ENCODE measurements at regions of chr5 and their contacts with region 1.

Region 1: GRCh38 chr5:132662925-132663770 is 5.2 kb downstream of the IL13 start:
- DNase-seq: peak; percentile 87
- CTCF ChIP-seq: no peak

Region 2: DNA sequence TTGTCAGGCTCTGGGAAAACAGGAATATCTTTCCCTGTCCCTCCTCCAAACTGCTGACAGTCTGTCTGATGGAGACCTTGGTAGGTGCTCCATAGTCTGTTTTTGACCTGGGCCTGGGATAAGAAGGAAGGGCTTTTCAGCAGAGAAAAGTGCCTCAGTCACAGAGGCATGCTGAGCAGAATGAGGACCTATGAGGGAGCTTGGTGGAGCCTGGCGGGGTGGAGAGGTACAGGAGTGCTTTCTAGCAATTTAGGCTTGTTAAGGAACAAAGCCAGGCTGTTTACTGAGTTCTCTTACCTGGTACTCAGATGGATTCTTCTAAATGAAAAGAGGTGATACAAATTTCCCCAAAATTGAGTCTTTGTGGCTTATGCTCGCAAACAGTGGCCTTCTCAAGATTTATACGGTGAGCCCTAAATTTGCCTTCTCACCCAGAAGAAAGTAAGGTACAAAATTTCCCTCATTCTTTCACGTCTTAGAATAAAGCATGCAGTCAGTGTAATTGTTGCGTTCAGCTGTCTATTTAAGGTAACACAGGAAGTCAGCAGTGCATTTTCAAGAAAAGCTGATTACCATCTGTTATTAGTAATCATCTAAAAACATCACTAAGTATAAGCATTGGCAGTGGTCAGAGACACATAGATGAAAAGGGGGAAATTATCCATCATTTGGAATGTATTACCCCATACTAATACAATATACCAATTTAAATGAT is 33.8 kb before region 1 on chr5:
- CTCF ChIA-PET with region 1: interaction called, 15 read pairs
- POLR2A ChIA-PET with region 1: no interaction called
- DNase-seq: peak; percentile 51
- CTCF ChIP-seq: no peak

Region 3: GRCh38 chr5:132639706-132640130 is 23.4 kb before region 1 on chr5:
- CTCF ChIA-PET with region 1: interaction called, 17 read pairs
- POLR2A ChIA-PET with region 1: interaction called, 5 read pairs
- DNase-seq: peak; percentile 37
- CTCF ChIP-seq: no peak

Region 4: DNA sequence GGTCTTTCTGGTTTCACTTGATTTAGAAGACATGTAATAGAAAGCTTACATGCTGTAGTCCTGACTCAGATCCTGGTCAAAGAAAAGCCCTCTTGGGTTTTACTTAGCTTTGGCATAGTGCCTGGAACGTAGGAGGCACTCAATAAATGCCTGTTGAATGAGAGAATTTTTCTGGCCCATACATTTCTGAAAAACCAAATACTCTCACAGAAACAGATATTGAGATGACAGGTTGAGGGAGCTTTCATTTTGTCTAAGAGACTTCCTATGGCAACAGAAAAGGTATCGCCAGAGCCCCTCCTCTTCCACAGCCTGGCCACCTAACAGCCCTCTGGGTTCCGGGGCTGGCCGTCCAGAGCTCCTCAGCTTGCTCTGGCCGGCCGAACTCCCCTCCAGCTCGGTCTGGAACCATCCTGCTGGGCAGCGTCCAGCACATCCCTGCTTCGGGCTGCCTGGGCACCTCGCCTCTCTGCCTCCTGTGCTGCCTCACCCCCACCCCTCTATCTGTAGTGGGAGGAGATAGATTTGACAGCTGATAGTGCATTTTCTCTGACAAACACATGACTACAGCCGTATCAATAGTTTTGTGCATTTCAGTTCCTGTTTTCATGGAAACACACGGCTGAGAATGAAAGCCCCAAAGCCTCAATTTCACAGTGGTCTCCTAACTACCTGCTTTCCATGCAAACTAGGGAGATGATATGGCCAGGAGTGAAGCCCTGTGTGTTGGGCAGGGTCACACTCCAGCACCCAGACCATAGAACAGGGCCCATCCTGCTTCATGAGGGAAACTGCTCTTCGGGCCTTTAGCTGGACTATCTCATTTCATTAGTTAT is 11.7 kb after region 1 on chr5:
- CTCF ChIA-PET with region 1: interaction called, 78 read pairs
- POLR2A ChIA-PET with region 1: interaction called, 21 read pairs
- DNase-seq: peak; percentile 84
- CTCF ChIP-seq: no peak

Region 5: GRCh38 chr5:133814152-133814551 is 1151.0 kb after region 1 on chr5:
- CTCF ChIA-PET with region 1: no interaction called
- POLR2A ChIA-PET with region 1: no interaction called
- DNase-seq: no peak
- CTCF ChIP-seq: no peak

Measured in GM10248 (cell line).